Right cardiac atrium (tissue), 5 donors: ENCODE measurements at regions of chr20 and their contacts with region 1.

Region 1: DNA sequence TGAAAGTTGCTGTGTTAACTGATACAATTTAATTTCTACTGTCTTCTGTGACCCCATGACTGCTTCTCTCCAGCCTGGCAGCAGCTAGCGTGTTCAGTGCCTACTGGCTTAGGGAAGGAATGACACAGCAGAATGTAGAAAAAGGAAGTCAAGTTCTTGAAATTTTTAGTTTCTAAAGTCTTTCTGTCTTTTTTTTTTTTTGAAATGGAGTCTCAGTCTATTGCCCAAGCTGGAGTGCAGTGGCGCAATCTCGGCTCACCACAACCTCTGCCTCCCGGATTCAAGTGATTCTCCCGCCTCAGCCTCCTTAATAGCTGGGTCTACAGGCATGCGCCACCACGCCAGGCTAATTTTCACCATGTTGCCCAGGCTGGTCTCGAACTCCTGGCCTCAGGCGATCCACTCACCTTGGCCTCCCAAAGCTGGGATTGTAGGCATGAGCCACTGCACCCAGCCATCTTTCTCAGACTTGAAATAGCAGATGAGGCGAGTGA is 39.3 kb downstream of the PCNA start:
- DNase-seq: peak; percentile 78 to 84 (median 82)
- ATAC-seq: peak; percentile 74 to 80
- H3K4me3 ChIP-seq: no peak overlapping the region
- H3K27ac ChIP-seq: peak overlapping the region; percentile 21
- H3K4me1 ChIP-seq: no peaks in the 10 kb centered on the region
- H3K27me3 ChIP-seq: no peaks in the 10 kb centered on the region

Region 2: DNA sequence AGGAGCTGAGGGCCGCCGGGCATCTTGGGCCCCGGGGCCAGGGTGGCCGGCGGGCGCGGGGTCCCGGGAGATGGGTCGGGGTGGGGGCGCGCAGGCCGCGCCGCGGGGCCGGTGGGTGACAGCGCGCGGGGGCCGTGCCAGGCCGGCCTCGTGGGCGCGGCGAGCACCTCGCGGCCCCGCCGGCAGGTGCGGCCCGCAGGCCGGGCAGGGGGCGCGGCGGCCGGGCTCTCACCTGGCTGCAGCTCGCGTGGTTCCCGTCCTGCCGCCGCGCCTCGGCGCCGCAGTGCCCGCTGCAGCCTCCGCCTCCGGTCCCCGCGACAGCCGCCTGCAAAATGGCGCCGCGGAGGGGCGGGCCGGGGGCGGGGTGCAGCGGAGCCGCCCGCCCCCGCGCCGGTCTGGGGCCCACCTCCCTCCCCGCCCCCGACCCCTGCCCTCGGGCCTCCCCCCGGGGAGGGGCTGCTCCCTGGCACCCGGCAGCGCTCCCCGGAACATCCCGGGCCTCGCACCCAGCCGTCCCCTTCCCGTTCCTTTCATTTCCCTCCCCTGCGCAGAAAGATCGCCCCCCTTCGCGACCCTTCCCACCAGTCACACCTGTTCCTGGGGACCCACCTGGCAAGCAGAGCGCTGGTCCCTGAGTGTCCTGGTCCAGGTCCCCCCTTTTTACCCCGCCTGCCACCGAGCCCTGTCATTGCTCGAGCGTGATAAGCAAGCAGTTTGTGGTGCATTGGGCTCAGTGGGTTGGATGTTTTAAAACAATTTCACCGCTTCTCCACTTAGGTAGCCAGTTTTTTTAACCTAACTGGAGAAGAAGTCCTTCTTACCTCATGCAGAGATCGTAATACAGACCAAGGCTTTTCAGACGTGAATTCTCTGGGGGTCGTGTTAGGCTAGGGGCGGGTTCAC is 79.0 kb before region 1 on chr20 and contains the start of gene SLC23A2:
- intact Hi-C with region 1: loop called in 1 of 4 experiments (anchors 10 kb)
- DNase-seq: peak; percentile 49 to 84 (median 80)
- ATAC-seq: peak; percentile 89 to 91
- H3K4me3 ChIP-seq: peak within 1 kb of the TSS; percentile 100
- H3K27ac ChIP-seq: no peak within 1 kb of the TSS
- H3K4me1 ChIP-seq: peaks cover 6% of the 10 kb centered on the region
- H3K27me3 ChIP-seq: no peaks in the 10 kb centered on the region
- total RNA-seq, gene SLC23A2: 11.8 to 15.9 (median 12.7) TPM